Natural killer cell (primary cell): ENCODE measurements at regions of chr9 and their contacts with region 1.

Region 1: GRCh38 chr9:90914868-90915483 is 113.4 kb downstream of the SYK start:
- DNase-seq: peak; percentile 59 to 88
- ATAC-seq: peak; percentile 89 to 99 (median 99)
- H3K4me3 ChIP-seq: no peak overlapping the region
- H3K4me3 Mint-ChIP-seq: no peak overlapping the region
- H3K27ac ChIP-seq: no peak overlapping the region
- H3K27ac Mint-ChIP-seq: no peak overlapping the region
- H3K4me1 ChIP-seq: peaks cover 3% of the 10 kb centered on the region
- H3K4me1 Mint-ChIP-seq: no peaks in the 10 kb centered on the region
- H3K27me3 ChIP-seq: no peaks in the 10 kb centered on the region
- H3K27me3 Mint-ChIP-seq: peaks cover 0 to 3% of the 10 kb centered on the region in 2 donors
- CTCF ChIP-seq: peak; percentile 91

Region 2: DNA sequence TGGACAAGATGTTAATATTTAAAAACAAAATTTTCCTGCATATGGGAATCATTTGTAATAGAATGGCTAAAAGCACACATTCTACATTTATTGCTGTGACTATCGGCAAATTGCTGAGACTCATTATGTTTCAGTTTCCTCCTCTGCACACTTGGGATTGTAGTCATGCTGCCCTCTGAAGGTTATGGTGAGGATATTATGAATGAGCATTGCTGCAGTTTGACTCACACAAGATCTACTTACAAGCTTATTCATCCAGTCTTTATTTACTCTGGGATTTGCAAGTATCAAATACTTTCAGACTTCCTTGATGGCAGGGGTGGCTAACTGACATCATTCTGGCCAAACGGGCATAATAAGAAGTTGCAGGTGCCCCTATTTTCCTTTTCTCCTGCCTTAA is 518.2 kb after region 1 on chr9:
- intact Hi-C with region 1: loop called (anchors 2 kb)
- DNase-seq: peak in 1 of 2 donors; percentile 61
- ATAC-seq: peak; percentile 65 to 79 (median 72)
- H3K4me3 ChIP-seq: no peak overlapping the region
- H3K4me3 Mint-ChIP-seq: no peak overlapping the region
- H3K27ac ChIP-seq: no peak overlapping the region
- H3K27ac Mint-ChIP-seq: no peak overlapping the region
- H3K4me1 ChIP-seq: no peaks in the 10 kb centered on the region
- H3K4me1 Mint-ChIP-seq: no peaks in the 10 kb centered on the region
- H3K27me3 ChIP-seq: no peaks in the 10 kb centered on the region
- H3K27me3 Mint-ChIP-seq: peaks cover 0 to 9% of the 10 kb centered on the region in 2 donors
- CTCF ChIP-seq: peak; percentile 50

Region 3: DNA sequence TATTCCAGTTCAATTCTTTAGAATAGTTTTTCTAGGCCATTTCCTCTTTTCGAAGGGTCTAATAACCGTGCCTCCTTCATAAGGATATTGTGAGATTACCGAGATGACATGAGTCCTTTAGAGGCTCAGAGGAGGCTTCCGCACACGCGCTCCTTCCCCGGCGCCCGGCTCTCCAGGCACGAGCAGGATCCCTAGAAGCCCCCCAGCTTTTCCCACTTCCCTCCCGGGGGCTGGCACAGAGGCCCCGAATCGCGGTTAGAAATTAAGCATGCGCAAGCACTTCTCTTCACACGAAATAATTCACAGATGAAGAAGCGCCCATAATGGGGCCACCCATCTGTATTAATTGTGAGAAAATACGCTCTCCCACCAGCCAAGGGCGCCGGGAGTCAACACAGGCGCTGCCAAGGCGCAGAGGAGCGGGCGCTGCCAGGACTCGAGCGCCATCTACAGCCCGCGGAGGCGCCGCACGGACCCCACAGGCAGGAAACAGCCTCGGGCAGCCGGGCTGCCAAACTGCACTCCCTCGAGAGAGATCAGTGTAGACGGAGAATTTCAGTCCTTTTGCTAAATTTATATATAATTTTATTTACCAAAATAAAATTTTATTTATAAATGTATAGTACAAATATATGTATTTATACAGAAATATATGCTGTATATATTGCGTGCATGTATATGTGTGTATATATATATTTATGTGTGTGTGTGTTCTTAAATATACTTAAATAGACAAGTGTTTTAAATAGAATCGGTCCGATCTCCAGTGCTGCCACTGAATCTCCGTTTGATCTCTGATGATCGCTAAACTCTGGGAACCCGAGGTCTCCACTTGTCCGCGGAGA is 766.7 kb after region 1 on chr9:
- intact Hi-C with region 1: loop called (anchors 1 kb)
- DNase-seq: peak; percentile 69 to 70
- ATAC-seq: peak; percentile 90 to 100 (median 99)
- H3K4me3 ChIP-seq: no peak overlapping the region
- H3K4me3 Mint-ChIP-seq: peak overlapping the region; percentile 71
- H3K27ac ChIP-seq: no peak overlapping the region
- H3K27ac Mint-ChIP-seq: no peak overlapping the region
- H3K4me1 ChIP-seq: peaks cover 7% of the 10 kb centered on the region
- H3K4me1 Mint-ChIP-seq: peaks cover 4% of the 10 kb centered on the region in 2 donors
- H3K27me3 ChIP-seq: no peaks in the 10 kb centered on the region
- H3K27me3 Mint-ChIP-seq: peaks cover 0 to 21% of the 10 kb centered on the region in 2 donors
- CTCF ChIP-seq: peak; percentile 95

Region 4: GRCh38 chr9:91727316-91727861 is 812.4 kb after region 1 on chr9:
- intact Hi-C with region 1: loop called (anchors 1 kb)
- DNase-seq: peak in 1 of 2 donors; percentile 58
- ATAC-seq: peak in 2 of 3 donors; percentile 73 to 85
- H3K4me3 ChIP-seq: no peak overlapping the region
- H3K4me3 Mint-ChIP-seq: no peak overlapping the region
- H3K27ac ChIP-seq: no peak overlapping the region
- H3K27ac Mint-ChIP-seq: no peak overlapping the region
- H3K4me1 ChIP-seq: no peaks in the 10 kb centered on the region
- H3K4me1 Mint-ChIP-seq: no peaks in the 10 kb centered on the region
- H3K27me3 ChIP-seq: no peaks in the 10 kb centered on the region
- H3K27me3 Mint-ChIP-seq: no peaks in the 10 kb centered on the region
- CTCF ChIP-seq: peak; percentile 65

Region 5: GRCh38 chr9:91949946-91950664 is 1035.1 kb after region 1 on chr9 and contains the start of gene ROR2:
- intact Hi-C with region 1: loop called (anchors 5 kb)
- DNase-seq: peak; percentile 46 to 58
- ATAC-seq: peak; percentile 65 to 88 (median 69)
- H3K4me3 ChIP-seq: no peak within 1 kb of the TSS
- H3K4me3 Mint-ChIP-seq: peak within 1 kb of the TSS; percentile 53
- H3K27ac ChIP-seq: no peak within 1 kb of the TSS
- H3K27ac Mint-ChIP-seq: no peak within 1 kb of the TSS
- H3K4me1 ChIP-seq: peaks cover 11% of the 10 kb centered on the region
- H3K4me1 Mint-ChIP-seq: peaks cover 0 to 11% of the 10 kb centered on the region in 2 donors
- H3K27me3 ChIP-seq: peaks cover 34% of the 10 kb centered on the region
- H3K27me3 Mint-ChIP-seq: peaks cover 52 to 65% of the 10 kb centered on the region in 2 donors
- CTCF ChIP-seq: peak; percentile 31
- total RNA-seq, gene ROR2: 1.7 TPM in 1 of 3 donors, not detected in the others